Dorsolateral prefrontal cortex (tissue), 120 donors: ENCODE measurements at regions of chr4 and their contacts with region 1.

Region 1: GRCh38 chr4:2418650-2419571 is at the start of gene CFAP99:
- DNase-seq: peak; percentile 95 to 99 (median 97)
- H3K4me3 ChIP-seq: peak within 1 kb of the TSS; percentile 54 to 95 (median 77)
- H3K27ac ChIP-seq: peak within 1 kb of the TSS in 48 of 59 donors; percentile 12 to 92 (median 72)
- H3K27me3 ChIP-seq: peaks cover 0 to 4% (median 0%) of the 10 kb centered on the region in 45 donors
- CTCF ChIP-seq: peak in 44 of 56 donors; percentile 5 to 64 (median 39)
- total RNA-seq, gene CFAP99: 0.28 to 3.7 (median 1.4) TPM

Region 2: DNA sequence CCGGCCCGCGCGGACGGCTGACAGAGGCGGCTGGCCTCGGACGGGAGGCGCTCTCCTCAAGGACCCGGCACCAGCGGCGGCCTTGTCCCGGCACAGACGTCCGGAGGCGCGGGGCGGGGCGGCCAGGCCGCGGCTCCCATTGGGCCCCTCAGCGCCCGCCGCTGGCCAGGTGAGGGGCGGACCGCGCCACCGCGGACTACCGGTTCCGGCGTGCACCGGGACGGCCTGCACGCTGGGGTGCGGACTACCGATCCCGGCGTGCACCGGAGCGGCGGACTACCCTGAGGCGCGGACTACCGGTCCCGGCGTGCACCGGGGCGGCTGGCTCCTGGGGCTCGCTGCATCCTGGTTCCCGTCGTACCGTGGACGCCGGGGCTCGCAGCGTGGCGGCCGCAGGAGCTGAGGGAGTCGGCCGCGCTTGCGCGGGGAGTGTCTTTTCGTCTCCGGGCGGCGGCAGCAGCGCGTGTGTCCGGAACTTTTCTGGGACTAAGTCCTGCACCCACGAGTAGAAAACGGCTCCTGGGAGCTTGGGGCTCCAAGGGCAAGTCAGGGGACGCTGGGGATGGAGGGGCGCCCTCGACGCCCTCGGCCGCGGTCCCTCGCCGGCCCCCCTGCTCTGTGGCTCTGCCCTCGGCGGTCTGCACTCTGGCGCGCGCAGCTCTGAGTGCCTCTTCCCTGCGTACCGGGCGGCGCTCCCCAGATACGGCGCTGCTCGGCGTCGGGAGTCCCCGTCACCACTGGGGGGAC is 562.7 kb before region 1 on chr4 and contains the start of gene LETM1:
- intact Hi-C with region 1: loop called in 1 of 2 experiments (anchors 10 kb)
- DNase-seq: peak; percentile 91 to 98 (median 96)
- H3K4me3 ChIP-seq: peak within 1 kb of the TSS; percentile 53 to 99 (median 93)
- H3K27ac ChIP-seq: peak within 1 kb of the TSS; percentile 14 to 96 (median 83)
- H3K27me3 ChIP-seq: no peaks in the 10 kb centered on the region
- CTCF ChIP-seq: peak in 41 of 56 donors; percentile 6 to 62 (median 33)
- total RNA-seq, gene LETM1: 36.9 to 61.2 (median 48.6) TPM

Region 3: GRCh38 chr4:2241410-2242353 is 177.2 kb before region 1 on chr4 and contains the starts of genes HAUS3 and POLN:
- intact Hi-C with region 1: loop called (anchors 2 to 5 kb)
- DNase-seq: peak; percentile 93 to 99 (median 96)
- H3K4me3 ChIP-seq: peak within 1 kb of the TSS; percentile 64 to 100 (median 96)
- H3K27ac ChIP-seq: peak within 1 kb of the TSS in 53 of 59 donors; percentile 2 to 89 (median 71)
- H3K27me3 ChIP-seq: no peaks in the 10 kb centered on the region
- CTCF ChIP-seq: peak in 22 of 56 donors; percentile 11 to 57 (median 40)
- total RNA-seq, gene HAUS3: 13.0 to 29.2 (median 19.3) TPM
- total RNA-seq, gene POLN: 9.4 to 50.0 (median 23.7) TPM

Region 4: DNA sequence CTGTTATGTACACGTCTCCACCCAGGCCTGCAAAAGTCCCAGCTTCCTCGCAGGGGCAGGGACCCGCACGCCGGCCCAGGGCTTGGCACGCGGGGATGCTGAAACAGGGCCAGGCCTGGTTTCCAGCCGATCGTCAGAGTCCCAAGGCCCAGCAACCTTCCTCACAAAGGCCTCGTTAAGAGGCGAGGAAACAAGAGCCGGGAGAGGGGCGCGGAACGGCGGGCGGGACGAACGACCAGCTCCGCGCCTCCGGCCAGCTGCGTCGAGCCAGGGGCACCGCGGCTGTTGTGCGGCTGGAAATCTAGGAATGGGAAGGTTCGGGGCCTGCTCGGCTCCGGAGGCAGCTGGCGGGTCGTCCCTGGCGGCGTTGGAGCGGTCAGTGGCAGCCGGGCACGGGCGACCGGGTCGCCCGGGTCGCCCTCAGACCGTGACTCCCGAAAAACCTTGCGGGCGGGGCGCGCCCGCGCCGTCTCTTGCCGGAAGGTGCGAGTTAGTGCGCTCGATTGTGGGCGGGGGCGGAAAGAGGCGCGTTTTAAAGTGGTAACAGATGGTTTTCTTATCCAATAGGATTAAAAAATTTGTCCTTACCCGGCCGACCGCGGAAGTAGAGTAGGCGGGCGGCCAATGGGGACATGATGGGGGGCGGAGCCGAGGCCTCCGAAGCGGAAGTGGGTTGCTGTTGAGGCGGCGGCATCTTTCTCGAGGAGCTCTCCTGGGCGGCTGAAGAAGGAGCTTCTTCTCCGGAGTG is 49.7 kb after region 1 on chr4 and contains the start of gene RNF4:
- intact Hi-C with region 1: loop called in 1 of 2 experiments (anchors 5 kb)
- DNase-seq: peak; percentile 86 to 97 (median 96)
- H3K4me3 ChIP-seq: peak within 1 kb of the TSS; percentile 71 to 100 (median 96)
- H3K27ac ChIP-seq: peak within 1 kb of the TSS; percentile 62 to 99 (median 93)
- H3K27me3 ChIP-seq: no peaks in the 10 kb centered on the region
- CTCF ChIP-seq: peak in 23 of 56 donors; percentile 2 to 56 (median 23)
- total RNA-seq, gene RNF4: 40.7 to 76.3 (median 56.4) TPM

Region 5: GRCh38 chr4:2536193-2537010 is 117.5 kb after region 1 on chr4 and contains the start of gene FAM193A:
- intact Hi-C with region 1: loop called (anchors 1 to 5 kb)
- DNase-seq: peak; percentile 98 to 100 (median 99)
- H3K4me3 ChIP-seq: peak within 1 kb of the TSS; percentile 74 to 97 (median 91)
- H3K27ac ChIP-seq: peak within 1 kb of the TSS; percentile 37 to 99 (median 94)
- H3K27me3 ChIP-seq: no peaks in the 10 kb centered on the region
- CTCF ChIP-seq: peak in 28 of 56 donors; percentile 5 to 47 (median 28)
- total RNA-seq, gene FAM193A: 30.7 to 56.7 (median 40.1) TPM